ENCODE measurements at regions of chr3 and their contacts with region 1.

Region 1: GRCh38 chr3:5347486-5347885 is 160.0 kb downstream of the EDEM1 start:
- DNase-seq: no peak
- H3K4me3 ChIP-seq: no peak overlapping the region
- H3K27ac ChIP-seq: no peak overlapping the region
- H3K4me1 ChIP-seq: no peaks in the 10 kb centered on the region
- H3K27me3 ChIP-seq: no peaks in the 10 kb centered on the region
- CTCF ChIP-seq: no peak

Region 2: DNA sequence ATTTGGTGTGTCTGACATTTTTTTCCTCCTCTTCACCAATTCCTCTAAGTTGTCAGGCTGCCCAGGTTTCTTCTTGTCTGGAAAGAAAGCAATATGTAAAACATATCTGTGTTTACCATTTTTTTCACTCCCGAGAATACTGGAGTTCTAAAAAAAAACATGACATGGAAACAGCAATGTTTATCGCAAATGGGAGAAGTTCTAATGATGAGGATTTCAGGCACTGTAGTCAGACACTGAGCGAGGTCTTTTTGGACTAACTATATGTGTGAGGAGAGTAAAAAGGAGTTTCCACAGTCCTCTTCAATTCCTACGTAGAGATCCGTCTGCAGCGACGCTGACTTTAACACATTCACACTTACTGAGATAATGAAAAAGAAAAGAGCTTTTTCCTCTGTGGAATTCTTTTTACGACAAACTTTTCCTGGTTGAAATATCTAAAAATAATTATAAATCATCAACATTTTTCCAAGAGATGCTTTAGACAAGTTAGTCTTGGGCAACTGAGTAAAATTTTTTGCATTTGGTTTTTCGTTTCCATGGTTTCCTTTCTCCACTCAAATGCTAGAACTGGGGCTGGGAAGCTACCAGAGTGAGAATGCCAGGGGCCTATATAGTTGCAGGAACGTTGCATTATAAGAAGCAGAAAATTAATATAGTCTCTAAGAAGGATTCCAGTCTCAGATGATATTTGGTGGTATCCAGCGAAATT is 1052.7 kb before region 1 on chr3:
- CTCF ChIA-PET with region 1: no interaction called
- POLR2A ChIA-PET with region 1: no interaction called
- intact Hi-C with region 1: no loop called
- DNase-seq: no peak
- H3K4me3 ChIP-seq: no peak overlapping the region
- H3K27ac ChIP-seq: no peak overlapping the region
- H3K4me1 ChIP-seq: no peaks in the 10 kb centered on the region
- H3K27me3 ChIP-seq: no peaks in the 10 kb centered on the region
- CTCF ChIP-seq: no peak

Region 3: GRCh38 chr3:5294356-5294755 is 53.1 kb before region 1 on chr3:
- CTCF ChIA-PET with region 1: no interaction called
- POLR2A ChIA-PET with region 1: no interaction called
- intact Hi-C with region 1: no loop called
- DNase-seq: no peak
- H3K4me3 ChIP-seq: no peak overlapping the region
- H3K27ac ChIP-seq: no peak overlapping the region
- H3K4me1 ChIP-seq: no peaks in the 10 kb centered on the region
- H3K27me3 ChIP-seq: no peaks in the 10 kb centered on the region
- CTCF ChIP-seq: no peak

Region 4: DNA sequence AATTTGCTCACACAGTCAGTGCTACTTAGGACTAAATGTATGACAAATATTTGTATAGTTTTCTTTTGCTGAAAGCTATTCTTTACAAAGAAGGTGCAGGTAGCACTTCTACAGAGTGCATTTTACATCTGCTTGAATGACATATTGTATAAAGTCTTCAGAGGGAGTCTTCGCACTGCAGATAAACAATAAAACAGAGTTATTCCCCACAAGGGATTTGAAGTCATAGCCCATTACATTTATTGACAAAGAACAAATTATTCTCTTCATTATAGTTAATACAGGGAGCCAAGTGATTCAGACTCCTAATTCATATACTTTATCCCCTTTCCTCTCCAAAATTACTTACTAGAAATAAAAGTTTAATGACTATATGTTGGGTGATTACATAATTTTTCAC is 369.8 kb after region 1 on chr3:
- CTCF ChIA-PET with region 1: interaction called, 10 read pairs
- POLR2A ChIA-PET with region 1: no interaction called
- intact Hi-C with region 1: no loop called
- DNase-seq: no peak
- H3K4me3 ChIP-seq: no peak overlapping the region
- H3K27ac ChIP-seq: no peak overlapping the region
- H3K4me1 ChIP-seq: no peaks in the 10 kb centered on the region
- H3K27me3 ChIP-seq: no peaks in the 10 kb centered on the region
- CTCF ChIP-seq: no peak